ENCODE measurements at regions of chr2 and their contacts with region 1.

Region 1: GRCh38 chr2:44167940-44168680 is 565 bp upstream of the PPM1B start:
- DNase-seq: peak; percentile 99 to 100
- H3K4me3 ChIP-seq: peak overlapping the region; percentile 57
- H3K27ac ChIP-seq: peak overlapping the region; percentile 84
- H3K4me1 ChIP-seq: peaks cover 29% of the 10 kb centered on the region
- H3K27me3 ChIP-seq: no peaks in the 10 kb centered on the region
- CTCF ChIP-seq: no peak

Region 2: DNA sequence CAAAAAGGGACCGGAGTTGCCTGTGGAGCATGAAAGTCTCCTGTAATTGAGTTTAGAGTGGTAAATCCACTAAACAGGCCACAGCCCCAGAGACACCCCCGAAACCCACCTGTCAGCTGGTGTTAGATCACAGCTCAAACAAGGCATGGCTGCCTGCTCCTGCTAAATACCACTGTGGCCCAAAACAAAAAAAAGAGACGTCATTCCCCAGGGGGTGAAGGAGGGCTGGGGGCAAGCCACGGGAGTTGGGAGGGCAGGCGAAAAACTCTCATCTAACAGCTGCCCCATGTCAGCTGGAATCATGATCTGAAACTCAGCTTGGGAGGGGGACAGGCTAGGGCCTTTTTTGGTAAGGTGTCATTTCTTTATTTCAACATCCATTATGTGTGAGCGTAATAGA is 129.8 kb before region 1 on chr2:
- CTCF ChIA-PET with region 1: no interaction called
- POLR2A ChIA-PET with region 1: interaction called, 12 read pairs
- intact Hi-C with region 1: no loop called
- DNase-seq: no peak
- H3K4me3 ChIP-seq: no peak overlapping the region
- H3K27ac ChIP-seq: no peak overlapping the region
- H3K4me1 ChIP-seq: no peaks in the 10 kb centered on the region
- H3K27me3 ChIP-seq: no peaks in the 10 kb centered on the region
- CTCF ChIP-seq: no peak

Region 3: DNA sequence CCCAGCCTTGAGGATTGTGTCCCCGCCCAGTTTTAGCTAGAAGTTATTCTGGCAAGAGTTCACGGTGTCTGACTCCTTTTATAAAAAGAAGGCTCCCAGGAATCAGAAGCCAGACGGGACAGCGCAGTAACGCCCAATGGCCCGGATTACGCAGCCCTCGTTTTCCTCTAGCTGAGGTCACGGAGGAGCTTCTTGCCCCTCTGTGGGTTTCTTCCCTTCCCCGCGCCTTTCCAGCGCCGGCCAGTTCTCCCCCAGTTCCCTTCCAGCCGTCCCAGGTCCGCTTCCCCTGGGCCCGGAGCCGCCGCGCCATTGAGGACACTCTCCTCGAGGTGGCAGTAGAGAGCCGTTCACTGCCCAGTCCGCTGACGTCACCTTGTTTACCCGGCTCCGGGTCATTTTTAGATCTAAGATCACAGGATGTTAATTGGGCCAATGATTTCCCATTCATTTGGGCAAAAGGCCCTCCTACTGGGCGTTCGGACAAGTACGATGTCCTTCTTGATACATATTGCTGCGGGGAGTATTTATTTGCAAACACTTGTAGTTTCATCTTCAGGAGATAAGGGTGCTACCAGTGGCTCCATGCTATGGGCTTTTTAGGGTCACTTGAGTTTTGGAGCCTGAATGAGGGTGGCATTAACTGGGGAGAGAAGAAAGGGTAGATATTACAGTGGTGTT is 80.9 kb before region 1 on chr2:
- CTCF ChIA-PET with region 1: interaction called, 3 read pairs
- POLR2A ChIA-PET with region 1: interaction called, 3 read pairs
- intact Hi-C with region 1: loop called (anchors 1 kb)
- DNase-seq: peak; percentile 66 to 87
- H3K4me3 ChIP-seq: peak overlapping the region; percentile 42; the same call in 1 of the 2 replicates
- H3K27ac ChIP-seq: no peak overlapping the region
- H3K4me1 ChIP-seq: peaks cover 10% of the 10 kb centered on the region; the same call in 1 of the 2 replicates
- H3K27me3 ChIP-seq: no peaks in the 10 kb centered on the region
- CTCF ChIP-seq: peak; percentile 99

Region 4: DNA sequence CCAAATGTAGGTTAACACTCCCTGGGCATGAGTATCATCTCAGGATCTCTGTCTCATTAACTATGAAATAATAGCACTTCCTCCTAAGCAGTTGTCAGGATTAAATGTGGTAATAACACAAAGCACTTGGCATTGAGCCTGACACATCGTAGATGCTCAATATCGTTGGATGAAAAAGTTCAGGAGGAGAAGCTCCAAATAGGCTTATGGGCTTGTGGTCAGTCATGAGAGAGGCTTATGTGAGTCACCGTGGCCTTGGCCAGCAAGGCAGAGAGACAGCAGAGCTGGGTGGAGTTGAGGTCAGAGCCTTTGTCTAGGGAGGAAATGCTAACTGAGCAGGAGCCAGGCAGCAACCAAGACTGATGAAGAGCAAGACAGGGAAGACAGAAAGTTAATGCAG is 67.8 kb before region 1 on chr2:
- CTCF ChIA-PET with region 1: no interaction called
- POLR2A ChIA-PET with region 1: interaction called, 30 read pairs
- intact Hi-C with region 1: loop called (anchors 1 kb)
- DNase-seq: peak; percentile 85 to 99
- H3K4me3 ChIP-seq: no peak overlapping the region
- H3K27ac ChIP-seq: peak overlapping the region; percentile 40
- H3K4me1 ChIP-seq: peaks cover 20% of the 10 kb centered on the region
- H3K27me3 ChIP-seq: no peaks in the 10 kb centered on the region
- CTCF ChIP-seq: no peak

Region 5: GRCh38 chr2:44136186-44136585 is 31.9 kb before region 1 on chr2:
- CTCF ChIA-PET with region 1: no interaction called
- POLR2A ChIA-PET with region 1: interaction called, 3 read pairs
- intact Hi-C with region 1: loop called (anchors 2 kb)
- DNase-seq: peak; percentile 37 to 97
- H3K4me3 ChIP-seq: peak overlapping the region; percentile 3; the same call in 1 of the 2 replicates
- H3K27ac ChIP-seq: peak overlapping the region; percentile 63
- H3K4me1 ChIP-seq: peaks cover 28% of the 10 kb centered on the region
- H3K27me3 ChIP-seq: no peaks in the 10 kb centered on the region
- CTCF ChIP-seq: no peak

Region 6: DNA sequence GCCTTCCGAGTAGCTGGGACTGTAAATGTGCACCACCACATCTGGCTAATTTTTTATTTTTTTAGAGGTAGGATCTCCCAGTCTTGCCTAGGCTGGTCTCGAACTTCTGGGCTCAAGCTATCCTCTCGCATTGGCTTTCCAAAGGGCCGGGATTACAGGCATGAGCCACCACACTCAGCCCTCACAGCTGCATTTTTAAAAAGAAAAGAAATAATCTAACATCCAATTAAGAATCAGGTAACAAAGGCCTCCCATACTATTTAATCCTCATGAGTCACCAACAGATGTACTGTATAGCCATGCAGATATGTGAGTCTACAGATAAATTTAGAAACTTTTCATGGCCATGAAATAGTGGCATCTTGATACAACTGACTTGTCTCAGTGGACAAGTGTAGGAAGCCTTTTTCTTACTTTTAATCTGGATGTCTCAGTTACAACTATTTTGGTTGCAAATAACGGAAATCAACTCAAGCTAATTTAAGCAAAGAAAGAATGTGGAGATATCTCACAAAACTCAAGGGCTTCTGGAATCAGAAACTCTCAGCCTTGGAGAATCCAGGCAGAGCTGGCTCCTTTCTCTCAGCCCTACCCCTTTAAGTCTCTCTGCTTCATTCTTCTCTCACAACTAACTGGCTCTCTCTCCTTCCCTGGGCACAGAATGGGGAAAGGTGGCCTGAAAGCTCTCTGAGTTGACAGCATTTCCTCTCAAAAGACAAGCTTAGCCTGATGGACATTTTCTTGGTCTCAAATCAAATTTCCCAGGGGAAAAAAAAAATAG is 12.3 kb before region 1 on chr2:
- CTCF ChIA-PET with region 1: no interaction called
- POLR2A ChIA-PET with region 1: interaction called, 16 read pairs
- intact Hi-C with region 1: no loop called
- DNase-seq: peak in 1 of 2 experiments; percentile 50
- H3K4me3 ChIP-seq: no peak overlapping the region
- H3K27ac ChIP-seq: no peak overlapping the region
- H3K4me1 ChIP-seq: no peaks in the 10 kb centered on the region
- H3K27me3 ChIP-seq: no peaks in the 10 kb centered on the region
- CTCF ChIP-seq: no peak

Region 7: DNA sequence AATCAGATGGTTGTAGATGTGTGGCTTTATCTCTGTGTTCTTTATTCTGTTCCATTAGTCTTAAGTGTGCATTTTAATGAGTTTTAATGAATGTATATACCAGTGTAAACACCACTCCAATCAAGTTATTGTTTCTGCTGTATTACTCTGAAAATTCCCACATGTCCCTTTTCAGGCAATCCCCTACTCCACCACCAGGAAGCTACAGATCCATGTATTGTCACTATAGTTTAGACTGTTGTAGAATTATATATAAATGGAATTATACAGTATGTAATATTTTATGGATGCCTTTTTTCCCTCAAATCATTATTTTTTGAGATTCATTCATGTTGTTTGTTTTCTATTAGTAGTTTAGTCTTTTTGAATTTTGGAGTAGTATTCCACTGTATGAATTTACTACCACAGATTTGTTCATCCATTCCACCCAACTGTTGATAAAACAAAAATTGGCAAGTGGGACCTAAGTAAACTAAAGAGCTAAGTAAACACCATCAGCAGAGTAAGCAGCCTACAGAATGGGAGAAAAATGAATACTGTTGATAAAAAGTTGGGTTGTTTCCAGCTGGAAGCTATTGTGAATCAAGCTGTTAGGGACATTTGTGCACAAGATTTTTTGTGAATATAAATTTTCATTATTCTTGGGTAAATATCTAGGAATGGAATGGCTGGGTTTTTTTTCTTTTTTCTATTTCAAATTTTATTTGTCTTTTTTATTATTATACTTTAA is 455.7 kb after region 1 on chr2:
- CTCF ChIA-PET with region 1: no interaction called
- POLR2A ChIA-PET with region 1: no interaction called
- intact Hi-C with region 1: no loop called
- DNase-seq: no peak
- H3K4me3 ChIP-seq: no peak overlapping the region
- H3K27ac ChIP-seq: no peak overlapping the region
- H3K4me1 ChIP-seq: 0 out of 2 replicates have a peak, but pooled peaks cover 5% of the 10 kb centered on the region
- H3K27me3 ChIP-seq: no peaks in the 10 kb centered on the region
- CTCF ChIP-seq: peak; percentile 38; the same call in 1 of the 2 replicates